Heart left ventricle (tissue), 16 donors: ENCODE measurements at regions of chr20 and their contacts with region 1.

Region 1: GRCh38 chr20:543369-544152 is at the start of gene CSNK2A1:
- DNase-seq: peak; percentile 95 to 97 (median 96)
- ATAC-seq: peak; percentile 98 to 99 (median 98)
- H3K4me3 ChIP-seq: peak within 1 kb of the TSS; percentile 71 to 99 (median 90)
- H3K27ac ChIP-seq: peak within 1 kb of the TSS; percentile 88 to 96 (median 92)
- H3K4me1 ChIP-seq: peaks cover 8 to 55% (median 36%) of the 10 kb centered on the region in 12 donors
- H3K27me3 ChIP-seq: no peaks in the 10 kb centered on the region
- CTCF ChIP-seq: no peak
- POLR2A ChIP-seq: peak; percentile 33 to 82
- total RNA-seq, gene CSNK2A1: 107 to 136 (median 126) TPM

Region 2: GRCh38 chr20:347640-348484 is 195.7 kb before region 1 on chr20:
- intact Hi-C with region 1: loop called in 2 of 10 experiments (anchors 5 kb)
- DNase-seq: peak; percentile 93 to 96 (median 95)
- ATAC-seq: peak; percentile 81 to 90 (median 90)
- H3K4me3 ChIP-seq: peak overlapping the region; percentile 69 to 97 (median 82)
- H3K27ac ChIP-seq: peak overlapping the region; percentile 88 to 99 (median 95)
- H3K4me1 ChIP-seq: peaks cover 0 to 35% (median 11%) of the 10 kb centered on the region in 12 donors
- H3K27me3 ChIP-seq: no peaks in the 10 kb centered on the region
- CTCF ChIP-seq: no peak
- POLR2A ChIP-seq: peak in 1 of 2 donors; percentile 61

Region 3: DNA sequence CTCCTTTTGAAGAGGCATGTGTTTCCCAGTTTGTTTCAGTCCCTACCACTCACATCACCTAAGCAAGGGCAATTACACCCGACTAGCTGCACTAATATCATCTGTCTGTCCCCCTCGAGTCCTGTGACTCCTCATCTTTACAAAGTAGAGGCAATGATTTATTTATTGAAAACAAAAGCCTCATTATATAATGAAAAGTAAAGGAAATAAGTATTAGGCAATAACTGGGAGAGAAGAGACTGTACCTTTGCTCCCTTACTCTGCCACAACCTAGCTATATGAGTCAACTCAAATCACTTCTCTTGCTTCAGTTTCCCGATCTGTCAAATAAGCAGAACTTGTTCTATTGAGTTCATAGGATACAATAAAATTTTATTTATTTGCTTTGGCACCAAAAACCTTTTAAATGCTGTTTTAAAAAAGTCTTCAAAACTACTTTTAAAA is 38.9 kb before region 1 on chr20:
- intact Hi-C with region 1: loop called in 1 of 10 experiments (anchors 5 kb)
- DNase-seq: no peak
- ATAC-seq: no peak
- H3K4me3 ChIP-seq: no peak overlapping the region
- H3K27ac ChIP-seq: no peak overlapping the region
- H3K4me1 ChIP-seq: peaks cover 0 to 31% (median 15%) of the 10 kb centered on the region in 12 donors
- H3K27me3 ChIP-seq: no peaks in the 10 kb centered on the region
- CTCF ChIP-seq: no peak
- POLR2A ChIP-seq: no peak

Region 4: DNA sequence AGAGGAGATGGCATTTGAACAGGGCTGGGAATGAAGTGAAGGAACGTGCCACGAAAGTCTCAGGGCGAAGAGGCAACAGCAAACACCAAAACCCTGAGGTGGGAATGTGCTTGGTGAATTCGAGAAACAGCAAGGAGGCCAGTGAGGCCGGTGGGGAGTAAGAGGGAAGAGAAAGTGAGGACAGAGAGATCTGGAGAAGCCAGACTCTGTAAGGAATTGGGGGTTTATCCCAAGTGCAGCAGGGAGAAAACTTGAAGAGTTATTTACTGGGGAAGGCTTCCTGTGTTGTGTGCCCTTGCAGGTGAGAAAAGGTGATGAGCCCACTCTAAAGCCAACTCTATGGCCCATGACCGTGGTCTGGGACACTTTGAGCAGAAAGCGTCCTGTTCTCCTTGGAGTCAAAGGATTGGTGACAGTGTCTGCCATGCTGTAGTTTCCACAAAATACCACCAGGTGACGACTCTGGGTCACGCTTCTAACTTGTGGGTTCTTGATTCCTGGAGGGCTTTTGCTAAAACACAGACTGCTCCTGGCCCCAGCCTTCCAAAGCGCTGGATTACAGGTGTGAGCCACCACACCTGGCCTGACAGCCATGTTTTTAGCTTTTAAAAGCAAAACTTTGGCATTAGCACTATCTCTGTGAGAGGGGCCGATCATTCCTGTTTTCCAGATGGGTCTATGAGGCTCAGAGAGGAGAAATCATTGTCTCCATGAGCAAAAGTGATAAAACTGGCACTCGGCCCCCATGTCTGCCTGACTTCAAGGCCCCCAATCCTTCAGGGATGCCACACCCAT is 18.1 kb after region 1 on chr20:
- intact Hi-C with region 1: no loop called
- DNase-seq: peak in 4 of 5 donors; percentile 66 to 76 (median 71)
- ATAC-seq: peak; percentile 70 to 90 (median 80)
- H3K4me3 ChIP-seq: no peak overlapping the region
- H3K27ac ChIP-seq: no peak overlapping the region
- H3K4me1 ChIP-seq: peaks cover 0 to 20% (median 1%) of the 10 kb centered on the region in 12 donors
- H3K27me3 ChIP-seq: no peaks in the 10 kb centered on the region
- CTCF ChIP-seq: peak; percentile 91 to 100 (median 99)
- POLR2A ChIP-seq: no peak

Region 5: DNA sequence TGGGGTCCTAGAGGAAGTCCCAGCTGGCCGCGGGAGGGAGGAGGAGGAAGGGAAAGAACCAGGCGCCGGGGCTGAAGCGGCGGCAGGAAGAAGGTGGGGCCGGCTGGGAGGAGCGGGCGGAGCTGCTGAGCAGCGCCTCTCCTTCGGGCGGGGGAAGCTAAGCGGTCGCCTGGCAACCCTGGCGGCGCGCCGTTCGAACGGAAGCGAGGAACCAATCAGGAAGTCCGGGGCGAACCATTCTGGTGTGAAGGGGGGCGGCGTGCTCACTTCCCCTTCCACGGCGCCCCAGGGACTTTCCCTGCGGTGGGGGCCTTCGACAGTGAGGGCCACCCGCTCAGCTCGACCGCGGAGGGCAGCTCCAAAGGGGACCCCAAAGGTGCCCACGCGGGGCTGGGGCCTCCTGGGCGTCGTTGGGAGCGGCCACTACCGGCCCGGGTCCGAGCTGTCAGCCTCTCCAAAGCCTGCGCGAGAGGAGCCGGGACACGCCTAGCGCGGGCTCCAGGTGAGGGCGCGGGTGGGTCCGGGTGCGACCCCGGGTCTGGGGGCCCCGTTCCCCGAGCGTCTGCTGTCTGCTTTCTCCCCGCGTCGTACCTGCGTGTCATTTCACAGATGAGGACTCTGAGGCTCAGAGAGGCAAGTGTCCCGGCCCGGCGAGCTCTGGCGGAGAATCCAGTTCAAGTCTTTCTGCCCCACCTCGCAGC is 290.0 kb after region 1 on chr20 and contains the start of gene FAM110A:
- intact Hi-C with region 1: loop called in 1 of 10 experiments (anchors 10 kb)
- DNase-seq: peak; percentile 97 to 98 (median 98)
- ATAC-seq: peak; percentile 94 to 98 (median 97)
- H3K4me3 ChIP-seq: peak within 1 kb of the TSS; percentile 69 to 97 (median 81)
- H3K27ac ChIP-seq: peak within 1 kb of the TSS; percentile 49 to 96 (median 84)
- H3K4me1 ChIP-seq: peaks cover 0 to 49% (median 22%) of the 10 kb centered on the region in 12 donors
- H3K27me3 ChIP-seq: no peaks in the 10 kb centered on the region
- CTCF ChIP-seq: no peak
- POLR2A ChIP-seq: no peak
- total RNA-seq, gene FAM110A: 1.2 to 8.1 (median 2.3) TPM